ENCODE measurements at regions of chr12 and their contacts with region 1.

Region 1: DNA sequence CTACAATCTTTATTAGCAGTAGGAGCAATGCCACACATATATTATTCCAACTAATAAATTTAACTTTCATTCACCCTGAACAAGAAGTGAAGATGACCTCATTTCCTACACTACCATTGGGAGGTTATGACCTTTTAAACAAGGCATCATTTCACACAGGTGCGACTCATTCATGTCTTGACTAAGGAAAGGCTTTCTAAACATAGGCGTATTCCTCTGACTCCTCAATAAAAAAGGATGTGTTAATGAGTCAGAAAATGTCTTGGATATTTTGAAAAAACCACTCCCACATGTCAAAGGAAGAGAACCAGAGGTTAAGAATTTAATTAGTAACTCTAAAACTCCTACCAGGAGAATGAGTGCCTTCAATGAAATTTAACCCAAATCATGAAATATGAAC is 115.2 kb downstream of the PRICKLE1 start:
- DNase-seq: no peak
- H3K4me3 ChIP-seq: no peak overlapping the region
- H3K27ac ChIP-seq: no peak overlapping the region
- H3K27me3 ChIP-seq: no peaks in the 10 kb centered on the region
- CTCF ChIP-seq: no peak

Region 2: DNA sequence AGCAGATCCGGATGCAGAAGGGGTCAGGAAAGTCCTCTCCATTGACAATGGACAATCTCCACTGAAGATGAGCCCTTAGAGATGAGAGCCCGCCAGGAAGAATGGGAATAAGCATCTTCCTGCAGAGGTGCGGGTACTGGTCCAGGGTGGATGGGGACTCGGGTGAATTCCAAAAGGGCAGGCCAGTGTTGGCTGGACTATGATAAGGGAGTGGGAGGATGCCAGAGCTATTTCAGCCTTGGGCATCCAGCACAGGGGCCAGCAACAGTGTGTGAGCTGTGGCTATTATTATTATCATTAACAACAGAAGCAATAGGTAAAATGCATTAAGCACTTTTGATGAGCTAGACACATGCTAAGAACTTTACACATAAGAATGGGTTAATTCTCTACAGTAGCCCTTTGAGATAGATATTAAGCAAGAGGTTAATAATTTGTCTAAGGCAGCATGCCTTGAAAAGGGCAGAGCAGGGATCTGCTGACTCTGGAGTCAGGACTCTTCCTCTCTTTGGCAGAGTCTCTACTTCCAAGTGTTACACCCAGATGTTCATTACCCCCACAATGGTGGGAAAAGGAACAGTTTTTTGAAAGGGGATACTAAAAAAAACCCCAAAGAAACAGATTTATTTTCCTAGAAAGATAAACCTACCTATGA is 59.9 kb after region 1 on chr12:
- CTCF ChIA-PET with region 1: no interaction called
- POLR2A ChIA-PET with region 1: no interaction called
- DNase-seq: no peak
- H3K4me3 ChIP-seq: no peak overlapping the region
- H3K27ac ChIP-seq: no peak overlapping the region
- H3K27me3 ChIP-seq: no peaks in the 10 kb centered on the region
- CTCF ChIP-seq: no peak

Region 3: GRCh38 chr12:42568952-42569915 is 94.8 kb after region 1 on chr12:
- CTCF ChIA-PET with region 1: interaction called, 14 read pairs
- POLR2A ChIA-PET with region 1: no interaction called
- DNase-seq: no peak
- H3K4me3 ChIP-seq: no peak overlapping the region
- H3K27ac ChIP-seq: no peak overlapping the region
- H3K27me3 ChIP-seq: no peaks in the 10 kb centered on the region
- CTCF ChIP-seq: peak; percentile 66

Region 4: DNA sequence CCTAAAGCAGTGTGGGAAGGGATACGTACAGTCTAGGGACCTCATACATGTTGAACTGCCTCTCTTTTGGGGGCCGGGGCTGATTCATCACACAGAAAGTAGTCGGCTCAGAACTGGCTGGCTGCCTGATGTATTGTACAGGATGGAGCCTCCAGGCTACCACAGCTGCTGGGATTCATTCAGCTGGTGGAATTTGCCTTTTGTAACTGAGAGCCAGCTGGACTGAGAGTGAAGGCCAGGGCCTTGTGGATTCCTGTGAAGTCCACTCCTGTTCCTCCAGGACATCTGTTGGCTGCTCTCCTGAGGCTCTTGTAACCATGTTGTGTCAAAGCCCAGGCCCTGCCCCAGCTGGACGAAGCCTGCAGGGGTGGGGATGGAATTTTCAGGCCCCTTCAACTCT is 231.5 kb after region 1 on chr12:
- CTCF ChIA-PET with region 1: no interaction called
- POLR2A ChIA-PET with region 1: interaction called, 11 read pairs
- DNase-seq: peak; percentile 91
- H3K4me3 ChIP-seq: no peak overlapping the region
- H3K27ac ChIP-seq: peak overlapping the region; percentile 70
- H3K27me3 ChIP-seq: peaks cover 2% of the 10 kb centered on the region
- CTCF ChIP-seq: no peak

Region 5: DNA sequence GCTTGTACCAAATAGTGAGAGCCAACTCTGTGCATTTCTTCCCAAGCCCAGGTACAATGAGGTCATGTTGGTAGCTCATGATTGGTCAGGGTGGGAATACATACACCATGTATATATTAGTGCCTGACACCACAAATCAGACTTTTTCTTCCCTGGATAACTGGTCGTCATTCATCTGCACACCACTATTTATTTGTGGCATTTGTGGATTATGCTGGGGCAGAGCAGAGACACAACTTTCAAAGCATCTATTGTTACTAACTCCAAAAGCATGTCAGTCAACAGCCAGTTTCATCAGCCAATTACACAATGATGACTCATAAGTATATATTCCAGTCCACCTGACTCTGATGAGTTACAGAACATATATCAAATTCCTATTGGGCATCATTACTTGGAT is 895.9 kb after region 1 on chr12:
- CTCF ChIA-PET with region 1: no interaction called
- POLR2A ChIA-PET with region 1: no interaction called
- DNase-seq: peak; percentile 18
- H3K4me3 ChIP-seq: no peak overlapping the region
- H3K27ac ChIP-seq: no peak overlapping the region
- H3K27me3 ChIP-seq: no peaks in the 10 kb centered on the region
- CTCF ChIP-seq: no peak